GM10248 (cell line): ENCODE measurements at regions of chr15 and their contacts with region 1.

Region 1: GRCh38 chr15:44501768-44502366 is 35.1 kb upstream of the EIF3J start:
- DNase-seq: peak; percentile 45
- CTCF ChIP-seq: peak; percentile 49

Region 2: DNA sequence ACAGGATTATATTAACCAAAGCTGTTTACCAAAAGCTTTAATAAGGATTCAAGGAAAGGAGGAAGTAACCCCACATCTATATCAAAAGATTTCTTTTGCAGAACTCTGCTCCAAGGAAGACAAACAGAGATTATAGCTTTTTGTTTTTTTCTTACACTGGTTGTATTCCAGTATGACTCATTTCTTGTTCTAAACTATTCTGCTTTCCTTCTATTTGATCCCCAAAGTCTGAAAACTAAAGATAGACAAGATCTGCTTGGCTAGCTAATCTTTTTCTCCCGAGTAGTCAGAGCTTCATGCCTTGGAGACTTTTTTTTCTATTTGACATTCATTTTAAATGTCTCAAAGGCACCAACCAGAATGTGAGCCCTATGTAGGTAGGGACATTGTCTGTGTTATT is 270.0 kb before region 1 on chr15:
- CTCF ChIA-PET with region 1: no interaction called
- POLR2A ChIA-PET with region 1: no interaction called
- DNase-seq: no peak
- CTCF ChIP-seq: no peak

Region 3: GRCh38 chr15:44489464-44489863 is 12.4 kb before region 1 on chr15:
- CTCF ChIA-PET with region 1: interaction called, 13 read pairs
- POLR2A ChIA-PET with region 1: no interaction called
- DNase-seq: no peak
- CTCF ChIP-seq: no peak